AG04449 (cell line): ENCODE measurements at regions of chr21 and their contacts with region 1.

Region 1: GRCh38 chr21:33360881-33361602 is 36.3 kb downstream of the IFNAR1 start:
- DNase-seq: peak; percentile 73
- H3K4me3 ChIP-seq: no peak overlapping the region
- CTCF ChIP-seq: peak; percentile 89

Region 2: DNA sequence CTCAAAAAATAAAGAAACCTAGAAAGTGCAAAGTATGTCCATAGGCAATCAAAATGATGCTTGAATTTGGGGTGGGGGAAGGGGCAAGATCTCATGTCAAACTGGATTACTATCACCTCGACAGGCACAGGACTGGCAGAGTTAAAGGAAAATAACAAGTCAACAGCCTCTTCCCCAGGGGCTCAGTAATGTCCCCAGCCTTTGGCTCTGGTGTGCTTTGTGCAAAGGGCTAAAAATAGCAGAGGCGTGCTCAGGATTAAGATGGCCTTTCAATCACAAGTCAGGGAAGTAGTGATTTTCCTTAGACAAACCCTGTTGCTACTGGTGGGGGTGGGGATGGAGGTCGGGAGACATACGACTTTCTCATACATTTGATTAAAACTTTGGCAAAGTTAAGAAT is 398.8 kb before region 1 on chr21:
- CTCF ChIA-PET with region 1: no interaction called
- POLR2A ChIA-PET with region 1: no interaction called
- DNase-seq: no peak
- H3K4me3 ChIP-seq: no peak overlapping the region
- CTCF ChIP-seq: no peak

Region 3: DNA sequence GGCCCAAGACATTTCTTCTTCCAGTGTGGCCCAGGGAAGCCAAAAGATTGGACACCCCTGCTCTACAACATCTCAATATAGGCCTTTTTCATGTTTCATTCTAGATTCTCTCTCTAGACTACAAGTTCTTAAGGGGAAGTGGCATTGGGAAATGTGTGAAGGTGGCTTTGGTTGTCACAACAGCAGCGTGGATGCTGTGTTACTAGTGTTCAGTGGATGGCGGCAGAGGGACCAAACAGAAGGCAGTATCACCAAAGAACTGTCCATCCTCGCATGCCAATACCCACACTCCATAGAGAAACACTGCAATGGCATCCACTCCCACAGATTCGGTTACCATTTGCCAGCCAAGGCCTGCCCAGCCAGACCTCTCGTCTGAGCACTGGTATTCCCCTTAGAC is 155.6 kb before region 1 on chr21:
- CTCF ChIA-PET with region 1: interaction called, 23 read pairs
- POLR2A ChIA-PET with region 1: no interaction called
- DNase-seq: no peak
- H3K4me3 ChIP-seq: no peak overlapping the region
- CTCF ChIP-seq: no peak

Region 4: GRCh38 chr21:33299181-33299752 is 61.8 kb before region 1 on chr21:
- CTCF ChIA-PET with region 1: no interaction called
- POLR2A ChIA-PET with region 1: no interaction called
- DNase-seq: no peak
- H3K4me3 ChIP-seq: no peak overlapping the region
- CTCF ChIP-seq: no peak

Region 5: DNA sequence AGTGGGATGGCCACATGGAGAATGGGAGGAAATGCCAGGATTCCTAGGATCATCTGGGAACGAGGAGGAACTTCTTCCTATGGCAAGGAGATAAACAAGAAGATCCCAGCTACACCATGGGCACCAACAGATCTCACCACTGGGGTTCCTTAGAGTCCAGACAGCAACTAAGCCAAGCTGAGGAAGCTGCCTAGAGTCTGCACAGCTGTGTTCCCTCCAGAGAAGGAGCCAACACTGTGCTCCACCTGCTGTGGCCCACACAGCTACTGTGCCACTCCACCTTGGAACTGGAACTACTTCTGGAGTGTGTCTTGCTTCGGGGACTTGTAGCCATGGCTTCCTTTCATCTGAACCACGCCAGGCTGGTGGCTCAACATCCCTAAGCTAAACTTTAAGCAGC is 30.3 kb before region 1 on chr21:
- CTCF ChIA-PET with region 1: interaction called, 16 read pairs
- POLR2A ChIA-PET with region 1: no interaction called
- DNase-seq: no peak
- H3K4me3 ChIP-seq: no peak overlapping the region
- CTCF ChIP-seq: no peak

Region 6: DNA sequence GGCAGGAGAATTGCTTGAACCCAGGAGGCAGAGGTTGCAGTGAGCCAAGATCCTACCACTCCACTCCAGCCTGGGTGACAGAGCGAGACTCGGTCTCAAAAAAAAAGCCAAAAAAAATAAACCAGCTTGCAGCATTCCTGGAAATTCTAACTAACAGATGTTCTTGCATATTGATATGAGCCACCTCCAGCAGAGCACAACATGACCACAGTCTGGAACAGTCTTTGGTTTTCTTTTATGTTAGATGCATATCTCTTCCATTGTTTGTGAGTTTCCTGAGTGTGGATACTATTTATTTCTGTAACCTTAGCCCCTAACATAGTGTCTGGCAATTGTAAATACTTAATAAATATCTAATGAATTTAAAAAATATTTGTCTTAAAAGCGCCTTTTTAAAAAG is 12.3 kb before region 1 on chr21:
- CTCF ChIA-PET with region 1: interaction called, 80 read pairs
- POLR2A ChIA-PET with region 1: no interaction called
- DNase-seq: no peak
- H3K4me3 ChIP-seq: no peak overlapping the region
- CTCF ChIP-seq: no peak

Region 7: DNA sequence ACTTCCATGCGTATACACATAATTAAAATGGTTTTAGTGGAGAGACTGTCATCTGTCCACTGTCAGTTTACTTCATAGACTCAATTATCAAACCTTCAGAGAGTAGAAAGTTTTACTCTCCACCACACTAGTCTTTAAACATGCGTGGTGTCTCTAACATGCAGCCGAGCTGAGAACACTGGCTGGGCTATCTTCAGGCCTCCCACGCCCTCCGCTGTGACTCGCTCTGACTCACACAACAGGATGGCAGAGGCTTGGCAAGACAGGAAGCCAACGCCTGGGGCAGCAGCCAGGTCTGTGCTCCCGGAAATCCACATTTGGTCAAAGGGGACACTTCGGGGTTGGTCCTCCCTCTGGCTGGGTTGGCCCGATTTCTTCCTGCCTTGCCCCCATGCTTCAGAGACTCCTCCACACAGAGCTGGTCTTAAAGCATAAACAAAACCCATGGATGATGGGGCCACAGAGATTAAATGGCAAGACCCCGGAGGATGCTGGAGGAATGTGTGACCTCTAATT is 19.5 kb after region 1 on chr21:
- CTCF ChIA-PET with region 1: interaction called, 64 read pairs
- POLR2A ChIA-PET with region 1: no interaction called
- DNase-seq: peak; percentile 89
- H3K4me3 ChIP-seq: no peak overlapping the region
- CTCF ChIP-seq: no peak

Region 8: GRCh38 chr21:33403779-33404585 is 42.9 kb after region 1 on chr21:
- CTCF ChIA-PET with region 1: interaction called, 12 read pairs
- POLR2A ChIA-PET with region 1: no interaction called
- DNase-seq: no peak
- H3K4me3 ChIP-seq: peak overlapping the region; percentile 71
- CTCF ChIP-seq: no peak

Region 9: DNA sequence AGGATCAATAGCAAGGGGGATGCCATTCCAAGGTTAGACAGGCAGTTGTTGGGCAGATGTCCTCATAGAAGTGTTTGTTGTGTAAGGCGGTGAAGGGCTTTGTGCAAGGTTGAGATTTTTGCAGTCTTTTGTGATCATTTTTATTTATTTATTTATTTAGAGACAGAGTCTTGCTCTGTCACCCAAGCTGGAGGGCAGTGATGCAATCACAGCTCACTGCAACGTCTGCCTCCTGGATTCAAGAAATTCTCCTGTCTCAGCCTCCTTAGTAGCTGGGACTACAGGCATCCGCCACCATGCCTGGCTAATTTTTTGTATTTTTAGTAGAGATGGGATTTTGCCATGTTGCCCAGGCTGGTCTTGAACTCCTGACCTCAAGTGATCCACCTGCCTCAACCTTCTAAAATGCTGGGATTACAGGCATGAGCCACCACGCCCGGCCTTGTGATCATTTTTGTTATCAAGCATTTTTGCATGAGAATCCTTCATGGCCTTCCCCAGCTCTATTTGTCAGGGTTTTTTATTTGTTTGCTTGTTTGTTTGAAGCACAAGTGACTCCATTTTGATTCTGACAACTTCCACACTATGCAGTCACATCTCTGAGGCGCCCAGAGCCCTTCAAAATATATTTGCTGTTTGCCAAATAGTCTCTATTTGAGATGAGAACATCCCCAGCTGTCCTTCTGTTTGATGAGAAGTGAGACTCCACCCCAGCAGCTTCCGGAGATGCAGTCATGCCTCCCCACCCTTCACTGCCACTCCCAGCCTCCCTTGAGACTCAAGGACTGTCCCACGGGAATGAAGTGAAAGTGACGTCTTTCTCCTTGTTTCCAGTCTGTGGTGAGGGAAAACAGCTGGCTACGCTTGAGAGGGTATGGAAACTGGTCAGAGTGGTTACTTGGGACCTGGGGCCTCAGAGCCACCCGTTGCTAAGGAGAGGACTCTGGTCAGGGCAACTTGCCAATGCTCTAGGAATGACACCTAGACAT is 80.7 kb after region 1 on chr21:
- CTCF ChIA-PET with region 1: interaction called, 86 read pairs
- POLR2A ChIA-PET with region 1: no interaction called
- DNase-seq: peak; percentile 33
- H3K4me3 ChIP-seq: no peak overlapping the region
- CTCF ChIP-seq: no peak

Region 10: DNA sequence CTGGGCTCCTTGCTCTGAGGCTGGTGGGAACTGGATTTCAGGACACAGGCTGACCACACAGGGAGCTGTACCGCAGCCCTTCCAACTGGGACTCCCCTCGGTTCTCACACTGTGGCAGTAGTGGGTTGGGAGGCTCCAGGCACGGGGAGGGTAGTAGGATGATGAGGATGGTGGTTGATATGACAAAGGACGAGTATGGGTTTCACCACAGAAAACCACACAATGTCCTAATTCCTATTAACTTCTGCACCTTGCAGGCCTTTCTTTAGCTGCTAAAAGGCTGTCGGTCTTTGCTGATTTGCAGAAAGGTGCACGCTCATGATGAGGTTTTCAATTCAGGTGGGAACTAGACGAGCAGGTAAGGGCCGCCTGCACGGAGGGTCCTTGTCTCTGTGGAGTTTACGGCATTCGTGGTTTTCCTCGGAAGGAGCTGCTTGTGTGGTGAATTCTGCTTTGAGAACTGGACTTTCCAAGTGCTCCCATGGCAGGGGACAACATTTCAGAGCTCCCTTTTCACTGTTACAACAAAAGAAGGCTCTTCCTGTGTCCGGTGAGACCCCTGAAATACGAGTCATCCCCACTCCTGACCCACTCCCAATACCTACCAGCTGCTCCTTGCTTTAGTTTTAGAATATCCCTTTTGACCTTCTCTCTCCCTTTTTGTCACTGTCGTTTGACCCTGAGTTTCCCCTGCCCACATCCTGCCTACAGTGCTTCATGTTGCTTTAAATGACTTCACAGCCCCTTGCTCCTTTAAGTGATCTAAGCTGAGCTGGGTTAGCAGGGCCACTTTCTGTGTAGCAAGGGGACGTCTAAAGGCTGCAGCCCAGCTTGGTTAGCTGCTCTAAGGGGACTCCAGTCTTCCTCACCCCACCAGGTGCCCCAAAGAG is 837.4 kb after region 1 on chr21:
- CTCF ChIA-PET with region 1: no interaction called
- POLR2A ChIA-PET with region 1: no interaction called
- DNase-seq: no peak
- H3K4me3 ChIP-seq: no peak overlapping the region
- CTCF ChIP-seq: no peak

Region 11: GRCh38 chr21:34545079-34545884 is 1184.2 kb after region 1 on chr21:
- CTCF ChIA-PET with region 1: no interaction called
- POLR2A ChIA-PET with region 1: no interaction called
- DNase-seq: no peak
- H3K4me3 ChIP-seq: no peak overlapping the region
- CTCF ChIP-seq: no peak